CD14-positive monocyte (primary cell): ENCODE measurements at regions of chr5 and their contacts with region 1.

Region 1: DNA sequence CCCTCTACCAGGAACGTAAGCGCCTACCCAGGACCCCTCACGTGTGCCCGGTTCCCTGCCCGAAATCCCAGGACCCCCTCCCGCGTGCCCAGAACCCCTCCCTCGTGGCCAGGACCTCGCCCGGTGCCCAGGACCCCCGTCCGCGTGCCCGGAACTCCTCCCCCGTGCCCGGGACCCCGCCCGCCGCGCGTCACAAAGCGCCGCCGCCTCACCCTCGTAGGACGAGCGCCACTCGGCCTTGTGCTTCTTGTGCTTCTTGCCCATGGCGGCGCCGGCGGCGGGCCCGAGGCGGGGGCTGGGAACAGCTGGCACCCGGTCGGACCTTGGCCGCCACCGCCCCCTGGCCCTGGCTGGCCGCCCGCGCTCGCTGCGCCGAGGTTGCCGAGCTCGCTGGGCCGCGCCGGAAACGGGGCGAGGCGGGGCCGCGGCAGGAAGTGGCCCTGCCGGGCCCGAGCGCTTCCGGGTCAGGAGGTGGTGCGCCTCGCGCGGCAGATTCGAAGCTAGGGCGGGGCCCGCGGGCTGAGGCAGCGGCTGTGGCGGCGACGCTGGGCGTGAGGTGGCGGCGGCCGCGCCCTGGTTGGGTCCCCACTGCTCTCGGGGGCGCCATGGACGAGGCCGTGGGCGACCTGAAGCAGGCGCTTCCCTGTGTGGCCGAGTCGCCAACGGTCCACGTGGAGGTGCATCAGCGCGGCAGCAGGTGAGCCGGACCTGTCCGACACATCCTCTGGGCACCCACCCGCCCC is at the starts of genes BRD9 and TRIP13:
- DNase-seq: peak; percentile 73 to 79 (median 76)
- H3K4me3 ChIP-seq: peak within 1 kb of the TSS; percentile 73 to 88 (median 76)
- H3K4me3 Mint-ChIP-seq: peak within 1 kb of the TSS; percentile 89 to 93
- H3K27ac ChIP-seq: peak within 1 kb of the TSS; percentile 10 to 90
- H3K27ac Mint-ChIP-seq: peak within 1 kb of the TSS; percentile 87 to 96 (median 90)
- H3K4me1 ChIP-seq: peaks cover 22 to 28% of the 10 kb centered on the region in 2 donors
- H3K4me1 Mint-ChIP-seq: peaks cover 19% of the 10 kb centered on the region
- H3K27me3 ChIP-seq: no peaks in the 10 kb centered on the region
- H3K27me3 Mint-ChIP-seq: peaks cover 0 to 2% (median 0%) of the 10 kb centered on the region in 3 donors
- CTCF ChIP-seq: no peak
- polyA plus RNA-seq, gene BRD9: 5.3 to 22.7 (median 9.3) TPM
- polyA plus RNA-seq, gene TRIP13: 0.24 to 1.2 TPM in 2 of 3 donors, not detected in the other

Region 2: DNA sequence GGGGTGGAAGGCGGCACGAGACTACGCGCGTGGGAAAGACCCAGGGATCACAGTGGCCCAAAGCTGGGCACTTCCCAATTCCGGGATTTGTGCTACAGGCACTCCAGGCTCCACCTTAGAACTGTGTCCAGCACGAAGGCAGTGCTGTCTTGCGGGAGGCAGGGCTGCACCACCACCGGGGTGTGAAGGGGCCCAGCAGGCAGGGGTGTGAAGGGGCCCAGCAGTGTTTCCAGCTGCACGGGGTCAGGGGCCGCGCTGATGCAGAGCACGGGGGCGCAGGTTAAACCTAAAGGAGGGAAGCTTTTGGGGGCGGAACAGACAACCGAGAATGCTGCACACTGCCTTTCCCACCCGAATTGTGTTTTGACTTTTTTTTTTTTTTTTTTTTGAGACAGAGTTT is 622.2 kb before region 1 on chr5:
- intact Hi-C with region 1: loop called in 1 of 2 experiments (anchors 5 kb)
- DNase-seq: no peak
- H3K4me3 ChIP-seq: peak overlapping the region in 1 of 3 experiments; percentile 88
- H3K4me3 Mint-ChIP-seq: peak overlapping the region; percentile 94 to 99
- H3K27ac ChIP-seq: no peak overlapping the region
- H3K27ac Mint-ChIP-seq: peak overlapping the region in 4 of 7 donors; percentile 25 to 97 (median 75)
- H3K4me1 ChIP-seq: peaks cover 15% of the 10 kb centered on the region in 2 donors
- H3K4me1 Mint-ChIP-seq: peaks cover 16% of the 10 kb centered on the region
- H3K27me3 ChIP-seq: no peaks in the 10 kb centered on the region
- H3K27me3 Mint-ChIP-seq: peaks cover 0 to 2% (median 0%) of the 10 kb centered on the region in 3 donors
- CTCF ChIP-seq: no peak

Region 3: DNA sequence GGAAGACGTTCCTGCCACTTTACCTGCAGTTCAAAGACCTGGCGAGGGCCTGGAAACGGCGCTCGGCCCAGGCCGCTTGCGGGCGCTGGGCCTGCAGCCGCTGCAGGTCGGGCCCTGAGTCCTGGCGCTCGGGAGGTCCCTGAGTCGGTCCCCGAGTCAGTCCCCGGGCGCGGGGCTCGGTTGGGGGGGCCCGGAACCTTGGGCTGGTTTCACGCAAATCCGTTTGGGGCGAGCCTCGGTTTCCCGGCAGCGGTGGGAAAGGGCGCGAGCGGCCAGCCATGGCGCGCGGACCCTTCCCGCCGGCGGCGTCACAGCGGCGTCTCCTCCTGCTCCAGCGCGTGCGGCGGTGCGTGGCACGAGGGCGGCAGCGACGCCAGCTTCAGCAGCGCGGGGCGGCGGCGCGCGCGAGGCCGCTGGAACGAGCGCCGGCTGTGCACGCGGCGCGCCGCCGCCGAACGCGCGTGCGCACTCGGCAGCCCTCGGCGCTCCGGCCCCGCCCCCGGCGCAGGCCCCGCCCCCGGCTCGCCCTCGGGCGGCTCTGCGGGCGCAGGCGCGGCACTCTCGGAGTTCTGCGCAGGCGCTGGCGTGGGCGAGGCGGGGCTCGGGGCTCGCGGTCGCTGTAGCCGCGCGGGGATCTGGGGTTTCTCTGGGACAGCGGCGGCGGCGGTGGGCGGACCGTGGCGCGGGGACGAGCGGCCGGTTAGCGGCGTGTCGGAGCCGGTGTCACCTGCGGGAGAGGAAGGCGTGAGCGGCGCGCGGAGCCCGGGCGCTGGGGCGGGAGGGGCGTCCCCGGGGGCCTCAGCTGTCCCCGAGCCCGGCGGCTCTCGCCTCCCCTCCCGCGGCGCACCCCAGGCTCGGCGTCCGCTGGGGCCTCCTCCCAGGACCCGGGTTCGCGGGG is 419.7 kb before region 1 on chr5:
- intact Hi-C with region 1: loop called in 1 of 2 experiments (anchors 10 kb)
- DNase-seq: peak; percentile 76 to 87 (median 77)
- H3K4me3 ChIP-seq: peak overlapping the region; percentile 51 to 87 (median 59)
- H3K4me3 Mint-ChIP-seq: peak overlapping the region; percentile 70 to 72
- H3K27ac ChIP-seq: peak overlapping the region in 1 of 2 donors; percentile 61
- H3K27ac Mint-ChIP-seq: no peak overlapping the region
- H3K4me1 ChIP-seq: peaks cover 22 to 40% of the 10 kb centered on the region in 2 donors
- H3K4me1 Mint-ChIP-seq: peaks cover 18% of the 10 kb centered on the region
- H3K27me3 ChIP-seq: peaks cover 4 to 31% of the 10 kb centered on the region in 2 donors
- H3K27me3 Mint-ChIP-seq: peaks cover 32 to 44% (median 43%) of the 10 kb centered on the region in 3 donors
- CTCF ChIP-seq: no peak

Region 4: DNA sequence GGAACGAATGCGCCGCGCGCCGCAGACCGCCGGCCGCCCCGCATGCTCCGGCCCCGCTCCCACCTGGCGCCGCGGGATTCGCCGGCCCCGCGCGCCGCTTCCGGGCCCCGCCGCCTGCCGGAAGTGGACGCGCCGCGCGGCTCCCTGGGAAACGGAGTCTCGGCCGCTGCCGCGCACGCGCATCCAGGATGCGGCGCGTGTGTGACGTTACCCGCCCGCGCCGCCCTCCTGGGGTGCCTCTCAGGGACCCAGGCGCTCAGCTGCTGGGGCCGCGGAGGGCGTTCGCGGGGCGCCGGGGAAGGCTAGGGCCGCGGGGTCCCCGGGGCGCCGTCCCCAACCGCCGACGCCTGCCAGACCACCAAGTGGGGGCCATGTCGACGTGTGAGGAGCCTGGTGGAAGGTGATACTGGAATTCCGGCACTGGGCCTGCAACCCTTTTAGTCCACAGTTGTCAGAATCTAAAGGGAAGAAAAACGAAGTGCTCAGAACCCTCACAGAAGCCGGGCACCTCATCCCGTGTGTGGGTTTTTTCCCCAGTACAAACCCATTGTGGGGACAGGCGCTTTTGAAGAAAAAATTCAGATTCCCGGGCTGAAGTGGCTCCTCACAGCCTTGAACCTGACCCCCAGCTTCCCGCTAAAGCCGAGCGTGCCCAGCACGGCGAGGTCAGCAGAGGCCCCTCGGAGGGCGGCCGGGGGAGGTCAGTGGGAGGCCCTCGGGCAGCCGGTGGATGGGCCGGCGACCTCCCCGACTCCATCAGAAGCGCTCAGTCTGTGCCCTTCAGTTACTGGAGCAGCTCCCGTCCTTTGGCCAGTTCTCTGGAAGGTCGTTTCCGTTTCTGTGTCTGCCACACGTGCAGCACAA is 452.6 kb after region 1 on chr5 and contains the start of gene CLPTM1L:
- intact Hi-C with region 1: loop called in 1 of 2 experiments (anchors 10 kb)
- DNase-seq: peak; percentile 87 to 88 (median 87)
- H3K4me3 ChIP-seq: peak within 1 kb of the TSS; percentile 87 to 97 (median 93)
- H3K4me3 Mint-ChIP-seq: peak within 1 kb of the TSS; percentile 85 to 90
- H3K27ac ChIP-seq: peak within 1 kb of the TSS; percentile 58 to 95
- H3K27ac Mint-ChIP-seq: peak within 1 kb of the TSS; percentile 19 to 84 (median 63)
- H3K4me1 ChIP-seq: peaks cover 16 to 30% of the 10 kb centered on the region in 2 donors
- H3K4me1 Mint-ChIP-seq: peaks cover 26% of the 10 kb centered on the region
- H3K27me3 ChIP-seq: no peaks in the 10 kb centered on the region
- H3K27me3 Mint-ChIP-seq: peaks cover 0 to 2% (median 0%) of the 10 kb centered on the region in 3 donors
- CTCF ChIP-seq: no peak
- polyA plus RNA-seq, gene CLPTM1L: 14.1 to 76.2 (median 35.0) TPM

Region 5: GRCh38 chr5:1799602-1800471 is 907.3 kb after region 1 on chr5 and contains the start of gene MRPL36:
- intact Hi-C with region 1: loop called (anchors 10 kb)
- DNase-seq: peak; percentile 90 to 92 (median 92)
- H3K4me3 ChIP-seq: peak within 1 kb of the TSS; percentile 61 to 90 (median 82)
- H3K4me3 Mint-ChIP-seq: peak within 1 kb of the TSS; percentile 95 to 100
- H3K27ac ChIP-seq: peak within 1 kb of the TSS; percentile 60 to 91
- H3K27ac Mint-ChIP-seq: peak within 1 kb of the TSS; percentile 95 to 98 (median 98)
- H3K4me1 ChIP-seq: peaks cover 18 to 33% of the 10 kb centered on the region in 2 donors
- H3K4me1 Mint-ChIP-seq: peaks cover 40% of the 10 kb centered on the region
- H3K27me3 ChIP-seq: no peaks in the 10 kb centered on the region
- H3K27me3 Mint-ChIP-seq: peaks cover 0 to 2% (median 0%) of the 10 kb centered on the region in 3 donors
- CTCF ChIP-seq: no peak
- polyA plus RNA-seq, gene MRPL36: 17.9 to 81.7 (median 65.9) TPM